PC-3 (cell line): ENCODE measurements at regions of chr15 and their contacts with region 1.

Region 1: DNA sequence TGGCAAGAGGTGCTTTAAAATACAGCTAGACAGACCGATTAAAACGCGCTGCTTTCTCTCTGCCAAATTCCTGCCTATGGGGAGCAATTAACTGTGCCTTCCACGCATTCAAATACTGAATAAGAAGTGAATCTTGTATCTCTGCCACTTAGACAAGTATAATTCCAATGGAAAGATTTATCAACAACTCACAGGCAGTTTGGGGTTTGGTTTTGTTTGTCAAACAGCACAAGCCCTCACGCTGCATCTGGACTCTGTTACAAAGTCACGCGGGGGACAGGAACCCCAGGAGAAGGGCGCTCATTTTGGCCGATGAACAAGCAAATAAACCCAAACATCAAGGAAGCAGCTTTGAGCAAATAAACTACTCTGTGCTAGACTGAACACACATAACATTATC is 61.8 kb upstream of the TMCO5A start:
- DNase-seq: no peak
- ATAC-seq: no peak; the same call in 1 of the 2 replicates
- H3K4me3 ChIP-seq: no peak overlapping the region
- H3K27ac ChIP-seq: no peak overlapping the region
- H3K4me1 ChIP-seq: peaks cover 14% of the 10 kb centered on the region
- H3K27me3 ChIP-seq: peaks cover 64% of the 10 kb centered on the region
- CTCF ChIP-seq: no peak

Region 2: GRCh38 chr15:37204692-37205091 is 668.0 kb before region 1 on chr15:
- CTCF ChIA-PET with region 1: interaction called, 13 read pairs
- POLR2A ChIA-PET with region 1: no interaction called
- intact Hi-C with region 1: no loop called
- DNase-seq: peak; percentile 22
- ATAC-seq: peak; percentile 46; the same call in 1 of the 2 replicates
- H3K4me3 ChIP-seq: no peak overlapping the region
- H3K27ac ChIP-seq: no peak overlapping the region
- H3K4me1 ChIP-seq: no peaks in the 10 kb centered on the region
- H3K27me3 ChIP-seq: peaks cover 25% of the 10 kb centered on the region
- CTCF ChIP-seq: peak; percentile 29; the same call in 1 of the 2 replicates

Region 3: DNA sequence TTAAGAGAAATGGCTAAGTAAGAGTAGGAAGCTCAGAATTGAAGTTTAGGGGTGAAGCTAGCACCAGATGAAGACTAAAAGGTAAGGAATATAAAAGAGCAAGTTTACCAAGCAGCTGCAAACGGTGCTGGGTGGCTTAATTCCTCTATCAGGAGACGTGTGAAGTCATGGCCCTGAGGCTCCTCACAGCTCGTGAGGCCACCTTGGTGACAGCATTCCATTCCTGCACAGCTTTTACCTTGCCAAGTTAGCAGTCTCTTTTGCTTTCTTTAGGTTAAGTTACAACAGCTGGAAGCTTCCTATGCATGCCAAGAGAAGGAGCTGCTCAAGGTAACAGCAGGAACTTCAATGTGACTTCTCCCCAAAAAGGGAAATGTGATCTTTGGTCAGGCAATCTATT is 68.2 kb after region 1 on chr15:
- CTCF ChIA-PET with region 1: no interaction called
- POLR2A ChIA-PET with region 1: no interaction called
- intact Hi-C with region 1: no loop called
- DNase-seq: no peak
- ATAC-seq: no peak
- H3K4me3 ChIP-seq: no peak overlapping the region
- H3K27ac ChIP-seq: no peak overlapping the region
- H3K4me1 ChIP-seq: no peaks in the 10 kb centered on the region
- H3K27me3 ChIP-seq: peaks cover 9% of the 10 kb centered on the region; the same call in 1 of the 2 replicates
- CTCF ChIP-seq: no peak